CD8-positive, alpha-beta T cell (primary cell): ENCODE measurements at regions of chr2 and their contacts with region 1.

Region 1: GRCh38 chr2:196171248-196171871 is at the start of gene STK17B:
- DNase-seq: peak; percentile 96 to 98 (median 97)
- ATAC-seq: peak; percentile 63
- H3K4me3 ChIP-seq: peak within 1 kb of the TSS; percentile 82 to 87
- H3K4me3 Mint-ChIP-seq: peak within 1 kb of the TSS; percentile 97
- H3K27ac ChIP-seq: peak within 1 kb of the TSS; percentile 91 to 98
- H3K27ac Mint-ChIP-seq: peak within 1 kb of the TSS; percentile 98
- H3K4me1 ChIP-seq: peaks cover 39% of the 10 kb centered on the region
- H3K4me1 Mint-ChIP-seq: peaks cover 42% of the 10 kb centered on the region
- H3K27me3 ChIP-seq: no peaks in the 10 kb centered on the region
- H3K27me3 Mint-ChIP-seq: no peaks in the 10 kb centered on the region
- CTCF ChIP-seq: no peak
- total RNA-seq, gene STK17B: 582 to 601 TPM

Region 2: GRCh38 chr2:196068271-196069209 is 102.8 kb before region 1 on chr2 and contains the start of gene DNAH7:
- CTCF ChIA-PET with region 1: interaction called, 3 read pairs
- POLR2A ChIA-PET with region 1: interaction called, 3 read pairs
- intact Hi-C with region 1: loop called (anchors 2 kb)
- DNase-seq: peak; percentile 79 to 97 (median 92)
- ATAC-seq: peak; percentile 94
- H3K4me3 ChIP-seq: peak within 1 kb of the TSS; percentile 62
- H3K4me3 Mint-ChIP-seq: peak within 1 kb of the TSS; percentile 83
- H3K27ac ChIP-seq: peak within 1 kb of the TSS; percentile 41 to 60
- H3K27ac Mint-ChIP-seq: peak within 1 kb of the TSS; percentile 81
- H3K4me1 ChIP-seq: peaks cover 9% of the 10 kb centered on the region
- H3K4me1 Mint-ChIP-seq: peaks cover 20% of the 10 kb centered on the region
- H3K27me3 ChIP-seq: no peaks in the 10 kb centered on the region
- H3K27me3 Mint-ChIP-seq: peaks cover under 1% of the 10 kb centered on the region
- CTCF ChIP-seq: peak; percentile 47
- total RNA-seq, gene DNAH7: not detected

Region 3: GRCh38 chr2:196143730-196144131 is 27.6 kb before region 1 on chr2:
- CTCF ChIA-PET with region 1: interaction called, 4 read pairs
- POLR2A ChIA-PET with region 1: interaction called, 24 read pairs
- intact Hi-C with region 1: loop called in 1 of 2 experiments (anchors 2 kb)
- DNase-seq: no peak
- ATAC-seq: no peak
- H3K4me3 ChIP-seq: no peak overlapping the region
- H3K4me3 Mint-ChIP-seq: peak overlapping the region; percentile 26
- H3K27ac ChIP-seq: peak overlapping the region in 1 of 2 experiments; percentile 16
- H3K27ac Mint-ChIP-seq: peak overlapping the region; percentile 81
- H3K4me1 ChIP-seq: peaks cover 81% of the 10 kb centered on the region
- H3K4me1 Mint-ChIP-seq: peaks cover 75% of the 10 kb centered on the region
- H3K27me3 ChIP-seq: no peaks in the 10 kb centered on the region
- H3K27me3 Mint-ChIP-seq: no peaks in the 10 kb centered on the region
- CTCF ChIP-seq: no peak

Region 4: DNA sequence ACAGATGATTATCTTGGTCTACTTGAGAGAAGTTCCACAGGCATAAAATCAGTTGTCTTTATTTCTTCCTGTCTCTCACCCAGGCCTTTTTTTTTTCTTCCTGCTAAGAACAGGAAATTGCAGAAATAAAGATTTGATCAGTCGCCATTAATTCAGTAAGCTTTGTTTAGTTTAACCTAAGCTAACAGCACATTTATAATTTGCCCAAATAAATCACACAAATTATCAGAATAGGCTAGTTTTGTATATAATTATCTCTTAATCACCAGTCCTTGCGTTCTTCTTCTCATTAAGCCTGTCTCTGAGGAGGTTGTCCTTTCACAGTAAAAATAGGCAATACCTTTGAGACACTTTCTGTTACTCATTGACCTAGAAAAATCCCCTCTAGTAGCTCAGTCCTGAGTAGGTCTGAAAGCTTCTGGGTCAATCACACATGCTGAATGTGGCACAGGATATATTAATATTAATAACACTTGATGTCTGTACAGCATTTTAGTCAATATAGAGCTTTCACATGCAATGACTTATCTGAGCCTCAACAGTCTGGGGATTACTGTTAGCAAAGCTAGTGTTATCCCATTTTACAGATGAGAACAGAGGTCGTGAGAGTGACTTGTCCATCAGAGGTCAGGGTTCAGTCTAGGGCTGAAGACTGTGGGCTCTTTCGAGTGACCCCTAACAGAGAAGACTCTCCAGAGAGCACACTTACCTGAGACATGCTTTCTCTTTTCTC is 11.2 kb after region 1 on chr2:
- CTCF ChIA-PET with region 1: interaction called, 8 read pairs
- POLR2A ChIA-PET with region 1: interaction called, 23 read pairs
- intact Hi-C with region 1: no loop called
- DNase-seq: peak in 2 of 9 experiments; percentile 60 to 77
- ATAC-seq: peak; percentile 22
- H3K4me3 ChIP-seq: no peak overlapping the region
- H3K4me3 Mint-ChIP-seq: peak overlapping the region; percentile 68
- H3K27ac ChIP-seq: peak overlapping the region; percentile 20 to 88
- H3K27ac Mint-ChIP-seq: peak overlapping the region; percentile 92
- H3K4me1 ChIP-seq: peaks cover 70% of the 10 kb centered on the region
- H3K4me1 Mint-ChIP-seq: peaks cover 88% of the 10 kb centered on the region
- H3K27me3 ChIP-seq: no peaks in the 10 kb centered on the region
- H3K27me3 Mint-ChIP-seq: no peaks in the 10 kb centered on the region
- CTCF ChIP-seq: no peak

Region 5: DNA sequence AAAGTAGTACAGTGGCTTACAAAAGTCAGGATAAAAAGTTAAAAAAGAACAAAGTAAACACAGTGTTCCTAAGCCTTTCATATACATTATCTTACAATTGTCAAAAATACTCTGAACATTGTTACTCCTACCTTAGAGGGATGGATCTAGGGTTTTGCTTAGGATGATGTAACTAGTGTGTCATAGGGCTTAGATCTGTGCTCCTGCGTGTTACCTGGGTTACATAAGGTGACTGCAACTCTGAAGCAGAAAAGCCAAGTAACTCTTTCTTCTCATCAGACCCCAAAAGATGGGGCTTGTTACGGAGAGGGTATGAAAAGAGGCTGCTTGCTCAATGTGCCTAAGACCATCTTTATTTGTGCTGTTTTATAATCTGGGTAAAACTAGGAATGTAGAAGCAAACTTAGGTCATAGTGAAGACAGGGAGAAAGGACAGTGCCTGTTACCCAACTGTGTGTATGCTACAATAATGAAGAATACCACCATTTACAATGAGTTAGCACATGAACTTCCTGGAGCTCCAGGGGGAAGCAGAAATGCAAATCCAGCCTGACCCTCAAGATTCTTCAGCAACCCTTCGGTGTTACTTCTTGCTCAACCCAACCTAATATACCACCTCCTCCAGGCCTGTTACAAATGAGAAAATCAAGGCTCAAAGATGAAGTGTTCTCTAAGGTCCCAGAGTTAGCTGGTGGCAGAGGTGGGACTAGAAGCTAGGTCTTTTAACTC is 42.1 kb after region 1 on chr2:
- CTCF ChIA-PET with region 1: interaction called, 62 read pairs
- POLR2A ChIA-PET with region 1: interaction called, 33 read pairs
- intact Hi-C with region 1: loop called (anchors 1 to 2 kb)
- DNase-seq: peak in 3 of 9 experiments; percentile 53 to 76 (median 54)
- ATAC-seq: peak; percentile 49
- H3K4me3 ChIP-seq: no peak overlapping the region
- H3K4me3 Mint-ChIP-seq: peak overlapping the region; percentile 30
- H3K27ac ChIP-seq: no peak overlapping the region
- H3K27ac Mint-ChIP-seq: peak overlapping the region; percentile 99
- H3K4me1 ChIP-seq: peaks cover 59% of the 10 kb centered on the region
- H3K4me1 Mint-ChIP-seq: peaks cover 82% of the 10 kb centered on the region
- H3K27me3 ChIP-seq: no peaks in the 10 kb centered on the region
- H3K27me3 Mint-ChIP-seq: no peaks in the 10 kb centered on the region
- CTCF ChIP-seq: no peak

Region 6: DNA sequence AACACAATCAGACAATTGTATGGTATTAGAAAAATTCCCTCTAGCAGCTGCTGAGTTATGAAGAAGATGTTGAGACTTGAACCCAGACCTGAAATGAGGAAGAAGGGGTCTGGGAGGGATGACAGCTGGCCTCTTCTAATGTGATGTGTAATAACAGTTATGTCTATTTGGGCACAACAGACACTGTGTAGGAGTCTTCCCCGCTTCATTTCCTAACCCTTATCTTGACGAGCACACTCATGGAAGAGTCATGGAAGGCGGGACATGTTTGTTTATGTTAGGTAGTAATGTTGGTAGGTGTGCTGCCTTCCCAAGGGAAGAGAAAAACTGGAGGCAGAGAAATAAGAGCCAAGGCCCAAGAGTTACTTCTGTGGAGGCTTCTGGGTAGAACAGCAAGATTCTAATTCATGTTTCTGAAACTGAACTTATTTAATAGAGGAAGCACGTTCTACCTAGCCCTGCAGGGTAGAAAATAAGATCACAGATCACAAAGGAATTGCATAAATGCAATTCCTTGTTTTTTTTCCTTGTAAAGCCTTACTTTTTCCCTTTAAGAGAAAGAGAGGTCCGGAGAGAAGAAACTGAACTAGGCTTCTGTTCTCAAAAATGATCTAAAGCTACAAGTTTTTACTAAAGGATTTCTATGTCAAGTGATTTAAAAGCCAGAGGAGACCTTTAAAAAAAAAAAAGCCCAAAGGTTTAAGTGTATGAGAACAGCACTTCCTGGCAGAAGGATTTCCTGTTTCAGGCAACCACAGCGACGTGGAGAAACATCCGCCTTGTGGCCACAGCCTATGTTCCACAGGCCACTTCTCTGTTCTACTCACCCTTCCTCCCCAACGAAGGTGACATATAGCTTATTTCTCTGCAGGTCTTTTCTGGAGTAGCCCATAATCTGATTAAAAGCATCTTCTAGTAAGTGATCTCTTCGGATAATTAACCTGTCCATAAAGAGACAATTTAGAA is 68.5 kb after region 1 on chr2:
- CTCF ChIA-PET with region 1: interaction called, 12 read pairs
- POLR2A ChIA-PET with region 1: interaction called, 31 read pairs
- intact Hi-C with region 1: loop called (anchors 1 kb)
- DNase-seq: peak; percentile 55 to 94 (median 81)
- ATAC-seq: peak; percentile 72
- H3K4me3 ChIP-seq: peak overlapping the region; percentile 7 to 21
- H3K4me3 Mint-ChIP-seq: peak overlapping the region; percentile 72
- H3K27ac ChIP-seq: peak overlapping the region; percentile 33 to 73
- H3K27ac Mint-ChIP-seq: peak overlapping the region; percentile 92
- H3K4me1 ChIP-seq: peaks cover 66% of the 10 kb centered on the region
- H3K4me1 Mint-ChIP-seq: peaks cover 74% of the 10 kb centered on the region
- H3K27me3 ChIP-seq: no peaks in the 10 kb centered on the region
- H3K27me3 Mint-ChIP-seq: no peaks in the 10 kb centered on the region
- CTCF ChIP-seq: peak; percentile 35